ENCODE measurements at regions of chr20 and their contacts with region 1.

Region 1: DNA sequence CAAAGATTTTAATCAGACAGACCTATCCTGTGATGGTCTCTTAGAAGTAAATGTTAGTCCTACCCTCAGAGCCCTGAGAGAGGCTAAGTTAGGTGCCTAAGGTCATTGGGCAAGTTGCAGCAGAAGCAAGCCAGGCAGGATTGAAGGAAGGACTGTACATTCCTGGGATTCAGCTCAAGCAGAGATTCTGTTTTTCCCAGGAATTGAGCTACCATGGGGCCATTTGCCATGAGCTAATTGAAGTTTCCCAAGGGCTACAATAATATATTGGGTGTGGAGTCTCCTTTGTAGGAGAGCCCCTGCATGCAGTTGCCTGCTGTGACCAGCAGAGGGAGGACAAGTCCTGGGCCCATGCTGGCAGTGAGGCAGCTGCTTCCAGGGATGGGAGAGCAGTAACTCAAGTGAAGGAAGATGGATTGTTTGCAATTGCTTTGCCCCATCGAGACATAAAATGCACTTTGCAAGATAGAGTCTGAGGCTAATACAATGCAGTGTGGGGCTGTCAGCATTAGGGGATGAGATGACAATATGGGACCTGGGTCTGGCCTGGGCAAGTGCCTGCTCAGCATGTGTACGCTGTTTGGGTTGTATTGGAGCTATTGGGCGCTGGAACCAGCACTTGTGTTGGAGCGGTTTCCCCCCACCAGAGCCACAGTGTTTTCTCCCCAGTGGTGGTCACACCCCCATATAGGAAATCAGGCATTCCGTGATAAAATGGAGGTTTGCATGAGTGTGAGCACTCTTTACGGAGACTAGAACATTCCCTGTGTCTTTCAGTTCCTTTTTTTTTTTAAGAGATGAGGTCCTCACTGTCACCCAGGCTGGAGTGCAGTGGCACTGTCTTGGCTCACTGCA is 27.9 kb downstream of the DNMT3B start:
- DNase-seq: no peak
- H3K4me3 ChIP-seq: no peak overlapping the region
- H3K27ac ChIP-seq: no peak overlapping the region
- H3K4me1 ChIP-seq: peaks cover 0 to 19% (median 0%) of the 10 kb centered on the region in 3 donors
- H3K27me3 ChIP-seq: no peaks in the 10 kb centered on the region
- CTCF ChIP-seq: peak; percentile 95 to 99 (median 98)
- POLR2A ChIP-seq: no peak

Region 2: GRCh38 chr20:32396646-32397160 is 393.4 kb before region 1 on chr20:
- intact Hi-C with region 1: no loop called
- DNase-seq: no peak
- H3K4me3 ChIP-seq: no peak overlapping the region
- H3K27ac ChIP-seq: no peak overlapping the region
- H3K4me1 ChIP-seq: no peaks in the 10 kb centered on the region
- H3K27me3 ChIP-seq: no peaks in the 10 kb centered on the region
- CTCF ChIP-seq: no peak
- POLR2A ChIP-seq: no peak

Region 3: DNA sequence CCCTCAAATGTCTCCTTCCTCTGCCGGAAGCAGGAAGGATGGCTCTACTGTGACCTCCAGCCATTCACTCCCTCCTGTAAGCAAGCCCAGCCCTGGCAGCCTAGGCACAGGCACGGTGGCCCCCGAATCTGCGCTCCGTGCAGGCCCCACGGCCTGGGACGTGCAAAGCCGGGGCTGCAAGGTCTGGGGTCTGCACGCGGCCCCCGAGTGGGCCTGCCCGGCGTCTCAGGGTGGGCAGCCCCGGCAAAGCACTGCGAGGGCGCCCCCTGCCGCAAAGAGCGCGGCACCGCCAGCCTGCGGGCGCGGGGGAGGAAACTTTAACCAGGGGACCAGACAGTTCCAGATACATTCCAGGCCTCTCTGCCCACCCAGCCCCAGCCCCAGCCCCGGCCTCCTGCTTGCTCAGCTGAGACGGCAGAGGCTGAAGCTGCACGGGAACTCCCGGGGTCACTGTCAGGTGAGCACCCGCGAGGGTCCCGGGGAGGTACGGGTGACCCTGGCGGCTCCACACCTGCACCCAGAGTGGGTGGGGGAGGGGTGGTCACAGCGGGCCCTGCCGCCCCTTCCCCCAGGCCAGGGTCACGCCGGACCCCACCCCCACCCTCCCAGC is 333.1 kb before region 1 on chr20:
- intact Hi-C with region 1: no loop called
- DNase-seq: no peak
- H3K4me3 ChIP-seq: peak overlapping the region in 3 of 4 donors; percentile 42 to 64 (median 43)
- H3K27ac ChIP-seq: no peak overlapping the region
- H3K4me1 ChIP-seq: peaks cover 10 to 21% (median 13%) of the 10 kb centered on the region in 3 donors
- H3K27me3 ChIP-seq: no peaks in the 10 kb centered on the region
- CTCF ChIP-seq: peak; percentile 54 to 73 (median 60)
- POLR2A ChIP-seq: no peak

Region 4: DNA sequence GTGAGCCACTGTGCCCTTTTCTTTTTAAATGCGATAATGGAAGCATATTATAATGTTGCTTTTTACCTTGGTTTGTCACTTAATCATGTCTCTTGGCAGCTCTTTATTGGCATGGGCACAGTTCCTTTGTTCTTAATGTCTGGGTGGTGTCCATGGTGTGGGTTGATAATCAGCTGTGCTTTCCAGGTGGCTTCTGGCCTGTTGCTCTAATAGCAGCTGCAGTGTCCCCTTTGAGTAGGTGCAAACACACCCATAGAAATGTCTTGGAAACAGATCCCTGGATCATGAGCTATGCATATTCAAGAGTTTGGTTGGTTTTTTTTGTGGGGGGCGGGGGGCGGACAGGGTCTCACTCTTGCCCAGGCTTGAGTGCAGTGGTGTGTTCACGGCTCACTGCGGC is 98.5 kb after region 1 on chr20:
- intact Hi-C with region 1: loop called (anchors 10 kb)
- DNase-seq: no peak
- H3K4me3 ChIP-seq: no peak overlapping the region
- H3K27ac ChIP-seq: no peak overlapping the region
- H3K4me1 ChIP-seq: no peaks in the 10 kb centered on the region
- H3K27me3 ChIP-seq: no peaks in the 10 kb centered on the region
- CTCF ChIP-seq: no peak
- POLR2A ChIP-seq: no peak